AG04449 (cell line): ENCODE measurements at regions of chr17 and their contacts with region 1.

Region 1: DNA sequence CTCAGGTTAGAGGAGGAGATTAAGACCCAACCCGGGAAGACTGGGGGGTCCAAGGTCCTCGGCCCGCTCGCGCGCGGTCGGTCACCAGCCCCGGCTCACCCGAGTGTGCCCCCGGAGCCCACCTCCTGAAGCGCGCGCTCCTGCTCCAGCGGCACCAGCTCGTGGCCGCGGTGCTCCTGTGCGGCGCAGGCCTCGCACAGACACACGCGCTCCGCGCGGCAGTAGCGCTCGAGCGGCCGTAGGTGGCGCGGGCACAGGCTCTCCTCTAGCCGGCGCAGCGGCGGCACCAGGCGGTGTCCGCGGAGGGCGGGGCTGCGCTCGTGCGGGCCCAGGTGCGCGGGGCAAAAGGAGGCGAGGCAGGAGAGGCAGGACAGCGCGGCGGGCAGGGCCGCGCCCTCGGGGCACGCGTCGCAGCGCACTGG is 618 bp downstream of the TRIM47 start:
- DNase-seq: no peak
- H3K4me3 ChIP-seq: peak overlapping the region; percentile 57
- CTCF ChIP-seq: peak; percentile 77

Region 2: GRCh38 chr17:75393523-75394331 is 484.0 kb before region 1 on chr17:
- CTCF ChIA-PET with region 1: no interaction called
- POLR2A ChIA-PET with region 1: no interaction called
- DNase-seq: peak; percentile 93
- H3K4me3 ChIP-seq: peak overlapping the region; percentile 88
- CTCF ChIP-seq: no peak

Region 3: GRCh38 chr17:75855310-75856081 is 22.3 kb before region 1 on chr17 and contains the start of gene WBP2:
- CTCF ChIA-PET with region 1: interaction called, 24 read pairs
- POLR2A ChIA-PET with region 1: interaction called, 5 read pairs
- DNase-seq: peak; percentile 99
- H3K4me3 ChIP-seq: peak within 1 kb of the TSS; percentile 97
- CTCF ChIP-seq: peak; percentile 57

Region 4: GRCh38 chr17:75861927-75862317 is 15.8 kb before region 1 on chr17:
- CTCF ChIA-PET with region 1: interaction called, 24 read pairs
- POLR2A ChIA-PET with region 1: interaction called, 4 read pairs
- DNase-seq: no peak
- H3K4me3 ChIP-seq: no peak overlapping the region
- CTCF ChIP-seq: no peak

Region 5: GRCh38 chr17:75917141-75917916 is 39.6 kb after region 1 on chr17:
- CTCF ChIA-PET with region 1: no interaction called
- POLR2A ChIA-PET with region 1: no interaction called
- DNase-seq: no peak
- H3K4me3 ChIP-seq: no peak overlapping the region
- CTCF ChIP-seq: no peak